ENCODE measurements at regions of chr6 and their contacts with region 1.

Region 1: DNA sequence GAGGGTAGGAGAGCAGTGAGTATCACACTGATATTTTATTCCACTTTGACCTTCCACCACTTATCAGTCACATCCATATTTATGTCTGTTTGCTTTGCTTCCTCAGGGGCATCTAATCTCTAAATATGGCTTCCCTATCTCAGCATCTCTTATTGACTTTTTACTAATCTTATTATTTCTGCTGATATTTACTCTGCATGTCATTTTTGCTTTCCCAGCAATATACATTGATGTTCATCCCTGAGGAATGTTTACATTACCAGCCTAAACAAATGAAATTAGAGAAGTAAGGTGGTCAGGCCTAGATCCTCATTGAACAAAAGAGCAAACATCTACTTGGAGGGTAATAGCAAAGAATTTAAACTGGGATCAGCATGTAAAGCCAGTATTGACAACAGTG is 546.5 kb downstream of the MMUT start:
- DNase-seq: peak; percentile 92
- ATAC-seq: peak; percentile 97
- H3K4me3 ChIP-seq: no peak overlapping the region
- H3K27ac ChIP-seq: peak overlapping the region; percentile 96
- H3K4me1 ChIP-seq: peaks cover 40% of the 10 kb centered on the region
- H3K27me3 ChIP-seq: no peaks in the 10 kb centered on the region
- CTCF ChIP-seq: no peak

Region 2: DNA sequence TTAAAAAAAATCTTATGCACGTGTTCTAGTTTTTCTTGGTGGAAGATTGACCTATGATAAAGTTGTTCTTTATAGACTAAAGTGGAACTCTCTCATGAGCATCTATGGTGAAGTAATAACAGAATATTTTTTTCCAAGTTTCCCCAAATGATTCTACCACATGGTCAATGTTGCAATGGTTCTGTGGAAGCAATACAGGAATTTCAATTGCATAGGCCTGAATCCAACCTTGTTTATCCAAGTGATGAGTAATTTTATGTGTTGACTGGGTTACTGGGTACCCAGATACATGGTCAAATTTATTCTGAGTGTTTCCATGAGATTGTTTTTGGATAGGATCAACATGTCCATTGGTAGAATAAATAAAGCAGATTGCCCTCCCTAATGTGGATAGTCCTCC is 35.0 kb before region 1 on chr6:
- CTCF ChIA-PET with region 1: no interaction called
- POLR2A ChIA-PET with region 1: no interaction called
- intact Hi-C with region 1: no loop called
- DNase-seq: peak; percentile 51
- ATAC-seq: peak; percentile 32
- H3K4me3 ChIP-seq: no peak overlapping the region
- H3K27ac ChIP-seq: no peak overlapping the region
- H3K4me1 ChIP-seq: peaks cover 26% of the 10 kb centered on the region
- H3K27me3 ChIP-seq: no peaks in the 10 kb centered on the region
- CTCF ChIP-seq: no peak

Region 3: DNA sequence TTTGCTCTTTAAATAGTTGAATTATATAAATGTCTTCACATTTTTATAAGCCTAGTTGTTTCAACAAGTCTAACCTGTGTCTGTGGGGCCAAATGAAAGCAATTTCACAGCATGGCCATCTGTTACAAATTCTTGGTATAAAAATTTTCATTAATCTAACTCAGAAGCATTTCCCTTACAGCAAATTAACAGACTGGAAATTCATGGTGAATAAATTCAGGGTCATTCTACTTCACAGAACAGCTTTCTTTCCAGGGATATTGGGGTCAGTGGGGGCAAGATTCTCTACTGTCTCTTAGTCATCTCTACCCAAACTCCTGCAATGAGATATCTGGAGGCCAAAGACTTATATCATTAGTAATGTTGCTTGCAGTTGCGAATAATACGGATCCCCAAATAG is 194.4 kb after region 1 on chr6:
- CTCF ChIA-PET with region 1: no interaction called
- POLR2A ChIA-PET with region 1: no interaction called
- intact Hi-C with region 1: loop called (anchors 10 kb)
- DNase-seq: no peak
- ATAC-seq: no peak
- H3K4me3 ChIP-seq: no peak overlapping the region
- H3K27ac ChIP-seq: no peak overlapping the region
- H3K4me1 ChIP-seq: no peaks in the 10 kb centered on the region
- H3K27me3 ChIP-seq: no peaks in the 10 kb centered on the region
- CTCF ChIP-seq: no peak